A549 (cell line): ENCODE measurements at regions of chr11 and their contacts with region 1.

Region 1: GRCh38 chr11:66438504-66439466 is at the start of gene MRPL11:
- DNase-seq: peak; percentile 94 to 98
- ATAC-seq: peak; percentile 95 to 97
- H3K4me3 ChIP-seq: peak within 1 kb of the TSS; percentile 69
- H3K27ac ChIP-seq: peak within 1 kb of the TSS; percentile 79 to 92
- H3K4me1 ChIP-seq: peaks cover 15% of the 10 kb centered on the region
- CTCF ChIP-seq: peak; percentile 78
- EP300 ChIP-seq: no peak
- POLR2A ChIP-seq: peak; percentile 40; the same call in 1 of the 2 replicates
- RAD21 ChIP-seq: peak; percentile 41 to 54; a peak in 4 of 5 replicates
- polyA plus RNA-seq, gene MRPL11: 62.9 and 70.1 TPM in 2 replicates

Region 2: DNA sequence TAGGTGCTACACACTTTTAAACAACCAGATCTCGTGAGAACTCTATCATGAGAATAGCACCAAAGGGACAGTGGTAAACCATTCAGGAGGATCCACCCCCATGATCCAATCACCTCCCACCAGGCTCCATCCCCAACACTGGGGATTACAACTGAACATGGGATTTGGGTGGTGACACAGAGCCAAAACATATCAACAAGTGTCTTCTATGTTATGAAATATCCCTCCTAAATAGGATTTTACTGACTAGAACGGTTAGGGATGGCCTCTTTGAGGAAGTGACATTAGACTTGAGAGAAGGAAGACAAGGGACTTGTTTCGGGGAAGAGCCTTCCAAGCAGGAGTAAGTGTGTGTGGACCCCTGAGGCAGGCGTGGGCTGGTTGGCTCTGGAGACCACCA is 11.8 kb after region 1 on chr11:
- CTCF ChIA-PET with region 1: interaction called, 21 read pairs
- POLR2A ChIA-PET with region 1: no interaction called
- DNase-seq: no peak
- ATAC-seq: no peak
- H3K4me3 ChIP-seq: no peak overlapping the region
- H3K27ac ChIP-seq: no peak overlapping the region
- H3K4me1 ChIP-seq: no peaks in the 10 kb centered on the region
- CTCF ChIP-seq: no peak
- EP300 ChIP-seq: no peak
- POLR2A ChIP-seq: no peak
- RAD21 ChIP-seq: no peak

Region 3: GRCh38 chr11:66466225-66467027 is 27.6 kb after region 1 on chr11 and contains the start of gene PELI3:
- CTCF ChIA-PET with region 1: interaction called, 15 read pairs
- POLR2A ChIA-PET with region 1: interaction called, 17 read pairs
- DNase-seq: peak; percentile 84 to 89
- ATAC-seq: peak; percentile 86 to 94
- H3K4me3 ChIP-seq: peak within 1 kb of the TSS; percentile 72
- H3K27ac ChIP-seq: peak within 1 kb of the TSS; percentile 76 to 95
- H3K4me1 ChIP-seq: peaks cover 10% of the 10 kb centered on the region
- CTCF ChIP-seq: no peak
- EP300 ChIP-seq: no peak
- POLR2A ChIP-seq: peak; percentile 17
- RAD21 ChIP-seq: no peak
- polyA plus RNA-seq, gene PELI3: 2.3 and 2.7 TPM in 2 replicates